Adrenal gland (tissue), 19 donors: ENCODE measurements at regions of chr4 and their contacts with region 1.

Region 1: GRCh38 chr4:40309250-40309774 is 25.8 kb upstream of the CHRNA9 start:
- DNase-seq: peak; percentile 81 to 97 (median 91)
- H3K4me3 ChIP-seq: no peak overlapping the region
- H3K27ac ChIP-seq: no peak overlapping the region
- H3K4me1 ChIP-seq: peaks cover 0 to 8% of the 10 kb centered on the region in 2 donors
- H3K27me3 ChIP-seq: no peaks in the 10 kb centered on the region
- CTCF ChIP-seq: peak; percentile 73 to 92 (median 85)
- POLR2A ChIP-seq: no peak

Region 2: GRCh38 chr4:39801975-39802374 is 507.3 kb before region 1 on chr4:
- intact Hi-C with region 1: no loop called
- DNase-seq: no peak
- H3K4me3 ChIP-seq: no peak overlapping the region
- H3K27ac ChIP-seq: no peak overlapping the region
- H3K4me1 ChIP-seq: no peaks in the 10 kb centered on the region
- H3K27me3 ChIP-seq: no peaks in the 10 kb centered on the region
- CTCF ChIP-seq: no peak
- POLR2A ChIP-seq: no peak

Region 3: DNA sequence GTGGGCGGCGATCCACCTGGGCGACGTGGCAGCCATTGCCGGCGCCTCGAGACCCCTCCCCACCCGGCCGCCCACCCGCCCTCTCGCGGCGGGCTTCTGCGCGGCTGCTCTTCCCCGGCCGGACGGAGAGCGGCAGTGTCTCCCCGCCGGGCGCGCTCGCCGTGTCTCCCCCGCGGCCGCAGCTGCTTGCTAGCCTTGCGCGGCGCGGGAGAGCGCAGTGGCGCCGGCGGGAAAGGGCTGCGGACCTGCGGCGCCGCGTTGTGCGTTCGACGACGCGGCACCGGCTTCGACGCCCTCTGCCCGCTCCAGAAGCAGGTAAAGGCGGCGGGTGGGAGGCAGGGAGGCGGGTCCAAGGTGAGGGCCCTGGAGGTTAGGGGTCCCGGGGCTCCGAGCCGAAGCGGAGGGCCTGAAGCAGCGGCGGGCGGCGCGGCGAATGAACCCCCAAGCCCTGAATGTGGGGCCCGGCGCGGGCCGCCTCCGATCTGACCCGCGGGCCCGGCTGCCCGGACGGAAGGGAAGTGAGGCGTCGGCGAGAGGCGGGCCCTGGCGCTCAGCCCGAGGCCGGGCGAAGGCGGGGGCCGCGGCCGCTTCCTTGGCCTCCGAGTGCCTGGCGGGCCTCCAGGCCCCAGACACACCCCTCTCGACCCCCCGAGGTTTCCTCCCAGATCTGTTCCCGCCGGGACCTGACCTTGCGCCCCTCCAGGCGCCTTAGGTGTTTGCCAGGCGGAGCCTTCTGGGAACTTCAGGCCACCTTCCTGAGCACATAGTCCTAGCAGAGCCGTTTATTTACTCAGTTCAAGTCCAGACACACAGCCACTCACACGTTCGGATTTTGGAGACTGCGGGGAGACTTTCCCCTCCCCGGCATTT is 252.4 kb before region 1 on chr4 and contains the start of gene N4BP2:
- intact Hi-C with region 1: loop called (anchors 5 to 10 kb)
- DNase-seq: peak; percentile 78 to 86 (median 82)
- H3K4me3 ChIP-seq: peak within 1 kb of the TSS; percentile 51 to 81 (median 69)
- H3K27ac ChIP-seq: peak within 1 kb of the TSS; percentile 92 to 100 (median 100)
- H3K4me1 ChIP-seq: peaks cover 5 to 12% of the 10 kb centered on the region in 2 donors
- H3K27me3 ChIP-seq: no peaks in the 10 kb centered on the region
- CTCF ChIP-seq: peak in 5 of 6 experiments; percentile 27 to 68 (median 60)
- POLR2A ChIP-seq: peak; percentile 88 to 89
- total RNA-seq, gene N4BP2: 2.3 to 15.1 (median 5.1) TPM

Region 4: DNA sequence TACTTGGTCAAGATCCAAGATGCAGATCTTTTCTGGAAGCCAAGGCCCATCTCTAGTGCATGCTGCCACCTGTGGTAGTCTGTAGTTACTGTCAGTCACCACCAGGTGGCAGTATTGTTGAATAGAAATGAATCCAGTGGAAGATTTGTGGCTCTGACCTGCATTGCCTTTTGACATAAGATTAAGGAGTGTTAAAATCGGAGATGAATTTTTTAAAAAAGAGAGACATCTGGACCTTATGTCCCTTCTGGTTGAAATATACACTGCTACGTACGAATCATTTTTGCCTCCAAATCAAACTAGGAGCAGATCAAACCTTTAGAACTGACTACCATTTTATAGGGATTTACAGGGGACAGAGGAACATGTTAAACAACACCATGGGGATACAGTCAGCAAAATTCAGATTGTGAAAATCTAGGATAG is 159.3 kb before region 1 on chr4:
- intact Hi-C with region 1: loop called (anchors 5 kb)
- DNase-seq: peak; percentile 55 to 83 (median 65)
- H3K4me3 ChIP-seq: no peak overlapping the region
- H3K27ac ChIP-seq: no peak overlapping the region
- H3K4me1 ChIP-seq: no peaks in the 10 kb centered on the region
- H3K27me3 ChIP-seq: no peaks in the 10 kb centered on the region
- CTCF ChIP-seq: peak; percentile 84 to 93 (median 86)
- POLR2A ChIP-seq: no peak